ENCODE measurements at regions of chr10 and their contacts with region 1.

Region 1: DNA sequence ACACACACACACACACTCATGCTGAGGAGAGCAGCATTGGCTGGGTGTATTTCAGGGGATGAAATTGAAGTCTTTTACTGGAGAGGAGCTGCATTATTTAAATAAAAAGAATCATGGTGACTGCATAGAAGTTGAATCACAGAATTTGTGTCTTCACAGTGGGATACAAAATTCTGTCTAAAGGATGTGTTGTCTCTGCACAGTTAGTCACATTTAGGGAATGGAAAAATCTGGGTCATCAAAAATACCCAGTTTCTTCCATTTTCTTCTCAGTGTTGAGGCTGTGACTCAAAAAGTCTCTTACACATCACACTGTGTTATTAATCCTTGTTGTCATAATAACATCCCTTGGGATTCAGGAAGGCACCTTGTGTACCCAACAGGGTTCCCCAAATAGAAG is 10.9 kb downstream of the PAPSS2 start:
- DNase-seq: no peak
- H3K4me3 Mint-ChIP-seq: no peak overlapping the region
- H3K27ac Mint-ChIP-seq: no peak overlapping the region
- H3K4me1 Mint-ChIP-seq: peaks cover 8% of the 10 kb centered on the region
- H3K27me3 Mint-ChIP-seq: peaks cover 8% of the 10 kb centered on the region

Region 2: GRCh38 chr10:87646939-87647338 is 23.6 kb before region 1 on chr10:
- CTCF ChIA-PET with region 1: interaction called, 4 read pairs
- intact Hi-C with region 1: loop called (anchors 1 kb)
- DNase-seq: peak; percentile 42
- H3K4me3 Mint-ChIP-seq: no peak overlapping the region
- H3K27ac Mint-ChIP-seq: no peak overlapping the region
- H3K4me1 Mint-ChIP-seq: peaks cover 20% of the 10 kb centered on the region
- H3K27me3 Mint-ChIP-seq: peaks cover 4% of the 10 kb centered on the region

Measured in activated naive CD4-positive, alpha-beta T cell treated with anti-CD3 and anti-CD28 coated beads for 36 hours (primary cell).